Activated T-helper 2 cell treated with anti-CD3 and anti-CD28 coated beads, Interferon-gamma antibody, Interleukin-2, Interleukin-4, amounts not matched to agents 10 μg/mL and 5 μg/mL and 100 μg/mL, durations not matched to agents 14 hours and 24 hours and 36 hours (primary cell): ENCODE measurements at regions of chr12 and their contacts with region 1.

Region 1: GRCh38 chr12:120327593-120327992 is at the start of gene PLA2G1B:
- DNase-seq: no peak
- H3K4me3 Mint-ChIP-seq: no peak within 1 kb of the TSS
- H3K27ac Mint-ChIP-seq: no peak within 1 kb of the TSS
- H3K4me1 Mint-ChIP-seq: peaks cover 9% of the 10 kb centered on the region
- H3K27me3 Mint-ChIP-seq: peaks cover 3% of the 10 kb centered on the region
- total RNA-seq, gene PLA2G1B: not detected in 2 replicates

Region 2: DNA sequence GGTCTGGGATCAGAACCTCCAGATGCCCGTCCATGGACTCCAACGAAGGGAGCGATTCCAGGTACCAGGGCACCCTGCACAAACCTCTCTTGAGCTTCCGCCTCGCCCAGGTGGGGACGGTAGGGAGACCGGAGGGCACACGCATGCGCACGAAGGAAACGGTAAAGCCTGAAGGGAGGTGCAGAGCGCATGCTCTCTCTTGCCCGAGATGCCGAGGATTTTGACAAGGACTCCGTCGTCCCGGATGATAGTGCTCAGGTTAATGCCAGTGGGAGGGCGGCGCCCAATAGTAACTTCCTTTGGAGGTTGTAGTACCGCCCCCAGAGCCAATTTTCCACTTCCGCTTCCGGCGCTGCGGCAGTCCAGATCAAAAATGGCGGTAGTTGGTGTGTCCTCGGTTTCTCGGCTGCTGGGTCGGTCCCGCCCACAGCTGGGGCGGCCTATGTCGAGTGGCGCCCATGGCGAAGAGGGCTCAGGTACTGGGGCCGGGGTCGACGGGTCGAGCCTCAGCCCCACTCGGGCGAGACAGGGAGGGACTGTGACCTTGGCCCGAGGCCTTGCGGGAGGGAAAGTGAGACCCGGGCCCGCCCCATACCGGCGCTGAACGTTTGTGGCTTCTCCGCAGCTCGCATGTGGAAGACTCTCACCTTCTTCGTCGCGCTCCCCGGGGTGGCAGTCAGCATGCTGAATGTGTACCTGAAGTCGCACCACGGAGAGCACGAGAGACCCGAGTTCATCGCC is 110.3 kb after region 1 on chr12 and contains the start of gene COX6A1:
- intact Hi-C with region 1: loop called (anchors 5 kb)
- DNase-seq: peak; percentile 98
- H3K4me3 Mint-ChIP-seq: peak within 1 kb of the TSS; percentile 98
- H3K27ac Mint-ChIP-seq: peak within 1 kb of the TSS; percentile 94
- H3K4me1 Mint-ChIP-seq: peaks cover 17% of the 10 kb centered on the region
- H3K27me3 Mint-ChIP-seq: no peaks in the 10 kb centered on the region
- total RNA-seq, gene COX6A1: 328 and 333 TPM in 2 replicates

Region 3: DNA sequence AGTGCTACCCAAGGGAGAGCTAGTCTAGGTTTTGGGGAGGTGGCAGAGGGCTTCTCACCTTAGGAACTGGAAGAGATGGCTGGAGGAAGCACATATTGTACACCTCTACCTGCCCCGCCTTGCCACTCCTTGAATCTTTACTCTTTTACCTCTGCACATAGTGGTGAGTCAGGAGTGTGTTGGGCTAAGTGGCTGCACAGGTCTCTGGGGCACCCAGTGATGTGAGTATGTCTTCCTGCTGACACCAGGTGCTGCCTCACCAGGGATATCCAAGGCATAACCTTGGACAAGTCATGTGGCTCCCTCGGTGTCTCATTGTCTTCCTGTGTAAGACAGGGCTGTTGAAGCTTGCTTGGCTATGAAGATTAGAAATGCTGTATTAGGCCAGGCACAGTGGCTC is 293.0 kb after region 1 on chr12:
- intact Hi-C with region 1: no loop called
- DNase-seq: no peak
- H3K4me3 Mint-ChIP-seq: no peak overlapping the region
- H3K27ac Mint-ChIP-seq: no peak overlapping the region
- H3K4me1 Mint-ChIP-seq: no peaks in the 10 kb centered on the region
- H3K27me3 Mint-ChIP-seq: peaks cover 17% of the 10 kb centered on the region